Astrocyte of the cerebellum (primary cell): ENCODE measurements at regions of chr1 and their contacts with region 1.

Region 1: DNA sequence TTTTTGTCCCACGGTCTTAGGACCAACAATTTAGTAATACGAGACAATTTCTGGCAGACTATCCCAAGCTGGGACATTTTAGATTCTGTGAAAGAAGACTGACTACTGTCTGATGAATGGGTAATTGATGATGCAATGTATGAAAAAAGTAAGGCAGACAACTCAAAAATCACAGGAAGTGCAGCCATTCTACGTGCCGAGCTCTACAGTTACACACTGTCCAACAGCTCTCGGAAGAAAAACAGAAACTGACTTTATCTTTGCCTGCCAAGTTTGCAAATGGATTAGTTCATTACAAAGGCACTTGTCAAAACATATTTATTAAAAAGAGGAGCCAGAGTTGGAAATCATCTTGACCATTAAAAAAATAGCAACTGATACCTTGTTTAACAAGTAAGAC is 31.3 kb downstream of the ZBTB8B start:
- DNase-seq: no peak
- H3K4me3 ChIP-seq: no peak overlapping the region
- CTCF ChIP-seq: no peak

Region 2: GRCh38 chr1:32100807-32101697 is 395.1 kb before region 1 on chr1:
- in situ Hi-C with region 1: no loop called
- DNase-seq: peak; percentile 35
- H3K4me3 ChIP-seq: no peak overlapping the region
- CTCF ChIP-seq: no peak

Region 3: GRCh38 chr1:32394141-32394889 is 101.8 kb before region 1 on chr1 and contains the start of gene BSDC1:
- in situ Hi-C with region 1: loop called (anchors 5 kb)
- DNase-seq: peak; percentile 88
- H3K4me3 ChIP-seq: peak within 1 kb of the TSS; percentile 79
- CTCF ChIP-seq: no peak

Region 4: DNA sequence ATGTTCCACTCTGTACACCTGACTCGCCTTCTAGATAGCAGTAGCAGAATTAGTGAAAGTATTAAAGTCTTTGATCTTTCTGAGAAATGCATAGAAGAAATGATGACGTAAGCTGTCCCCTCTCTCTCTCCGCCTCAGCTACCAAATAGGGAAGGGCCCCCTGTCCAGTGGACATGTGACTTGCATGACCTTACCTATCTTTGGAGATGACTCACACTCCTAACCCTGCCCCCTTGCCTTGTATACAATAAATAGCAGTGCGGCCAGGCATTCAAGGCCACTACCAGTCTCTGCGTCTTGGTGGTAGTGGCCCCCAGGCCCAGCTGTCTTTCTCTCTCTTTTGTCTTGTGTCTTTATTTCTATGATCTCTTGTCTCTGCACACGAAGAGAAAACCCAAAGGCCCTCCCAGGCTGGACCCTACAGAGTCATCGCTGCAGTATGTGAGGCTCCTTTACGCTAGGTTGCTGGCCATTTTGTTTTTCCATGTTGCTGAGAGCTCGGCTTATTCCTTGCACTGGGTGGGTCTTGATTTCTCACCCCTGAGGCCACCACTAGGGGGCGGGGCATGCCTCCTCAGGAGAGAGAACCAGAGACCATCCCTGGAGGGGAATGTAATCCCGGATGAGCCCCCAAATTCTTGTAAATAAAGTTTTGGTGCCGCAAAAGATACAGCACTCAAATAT is 47.2 kb before region 1 on chr1:
- in situ Hi-C with region 1: no loop called
- DNase-seq: no peak
- H3K4me3 ChIP-seq: no peak overlapping the region
- CTCF ChIP-seq: peak; percentile 9

Region 5: GRCh38 chr1:32619701-32620485 is 123.8 kb after region 1 on chr1:
- in situ Hi-C with region 1: no loop called
- DNase-seq: no peak
- H3K4me3 ChIP-seq: no peak overlapping the region
- CTCF ChIP-seq: no peak